ENCODE measurements at regions of chr17 and their contacts with region 1.

Region 1: DNA sequence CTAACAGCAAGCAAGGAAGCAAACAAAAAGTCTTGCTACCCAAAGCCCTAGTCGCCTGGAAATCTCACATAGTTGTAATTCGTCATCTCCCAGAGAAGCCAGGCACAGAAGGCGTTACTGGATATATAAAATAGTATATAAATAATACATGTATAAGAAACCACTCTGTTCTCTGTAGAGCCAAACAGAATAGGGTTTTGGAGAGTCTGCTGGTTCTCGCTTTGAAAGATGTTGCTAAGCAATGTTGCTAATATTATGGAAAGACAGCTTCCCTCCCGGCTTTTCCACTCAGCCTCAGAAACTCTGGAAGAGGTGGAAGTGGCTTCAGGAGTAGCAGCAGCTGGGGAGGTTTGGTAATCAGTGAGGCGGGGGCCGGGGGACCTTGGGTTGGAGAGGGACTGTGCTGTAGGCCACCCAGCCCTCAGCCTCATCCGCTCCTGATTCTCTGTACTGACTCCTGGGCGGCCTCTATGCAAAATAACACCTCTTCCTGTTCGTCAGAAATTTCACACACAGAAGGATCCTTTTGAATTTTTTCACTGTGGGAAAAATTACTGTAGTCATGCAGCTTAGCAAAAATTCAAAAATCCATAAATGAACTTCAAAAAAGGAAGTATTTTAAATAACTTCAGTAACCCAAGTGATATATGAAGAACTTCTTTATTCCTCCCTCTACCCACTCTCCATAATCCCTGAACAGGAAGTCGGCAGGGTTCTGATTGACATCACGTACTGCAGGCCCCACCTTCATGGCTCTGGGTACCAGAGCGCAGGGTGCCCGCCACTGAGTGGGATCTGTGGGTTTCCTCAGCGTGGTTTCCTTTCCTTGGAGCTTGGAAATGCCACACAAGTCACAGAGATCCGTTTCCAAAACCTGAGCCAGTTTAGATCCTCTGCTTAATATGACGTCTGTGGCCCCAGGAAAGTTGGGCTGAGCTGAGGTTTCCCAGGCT is 51.4 kb downstream of the RAP1GAP2 start:
- DNase-seq: peak; percentile 16
- ATAC-seq: no peak
- H3K4me3 Mint-ChIP-seq: no peak overlapping the region
- H3K27ac Mint-ChIP-seq: no peak overlapping the region
- H3K4me1 Mint-ChIP-seq: peaks cover 15% of the 10 kb centered on the region
- H3K27me3 Mint-ChIP-seq: peaks cover 13% of the 10 kb centered on the region

Region 2: DNA sequence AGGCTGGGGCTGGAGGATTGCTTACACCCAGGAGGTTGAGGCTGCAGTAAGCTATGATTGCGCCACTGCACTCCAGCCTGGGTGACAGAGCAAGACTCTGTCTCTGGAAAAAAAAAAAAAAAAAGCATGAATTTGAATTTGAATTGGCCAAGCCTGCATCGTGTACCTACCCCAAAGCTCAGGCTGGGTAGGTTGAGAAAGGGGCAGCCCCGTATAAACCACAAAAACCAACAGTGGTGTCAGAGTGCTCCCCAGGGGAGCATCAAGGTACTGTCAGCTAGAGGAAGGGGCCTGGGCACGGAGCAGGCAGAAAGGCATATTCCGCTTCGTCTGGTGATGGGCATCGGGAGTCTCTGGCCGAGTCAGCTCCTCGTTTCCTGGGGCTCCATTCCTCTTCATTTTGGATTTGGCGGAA is 10.5 kb before region 1 on chr17:
- CTCF ChIA-PET with region 1: interaction called, 15 read pairs
- POLR2A ChIA-PET with region 1: no interaction called
- intact Hi-C with region 1: no loop called
- DNase-seq: peak; percentile 79
- ATAC-seq: peak; percentile 100
- H3K4me3 Mint-ChIP-seq: no peak overlapping the region
- H3K27ac Mint-ChIP-seq: no peak overlapping the region
- H3K4me1 Mint-ChIP-seq: peaks cover 8% of the 10 kb centered on the region
- H3K27me3 Mint-ChIP-seq: no peaks in the 10 kb centered on the region

Region 3: DNA sequence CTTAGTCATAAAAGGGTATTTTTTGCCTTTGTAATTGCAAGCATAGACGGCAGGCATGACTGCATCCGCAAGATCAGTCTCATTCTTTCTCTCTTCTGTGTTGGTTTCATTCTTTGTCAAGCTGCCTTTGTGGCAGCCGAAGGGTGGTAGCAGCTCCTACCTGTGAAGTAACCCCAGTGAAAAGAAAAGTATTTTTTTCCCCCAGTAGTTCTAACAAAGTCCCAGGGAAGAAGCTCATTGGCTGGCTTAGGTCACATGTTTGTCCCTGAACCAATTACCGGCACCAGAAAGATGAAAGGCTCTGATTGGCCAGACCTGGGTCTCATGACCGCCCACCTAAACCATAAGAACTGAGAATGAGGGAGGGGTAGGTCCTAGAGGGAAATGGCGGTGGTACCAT is 59.2 kb after region 1 on chr17:
- CTCF ChIA-PET with region 1: no interaction called
- POLR2A ChIA-PET with region 1: no interaction called
- intact Hi-C with region 1: loop called in 1 of 2 experiments (anchors 2 kb)
- DNase-seq: peak; percentile 76
- ATAC-seq: peak; percentile 99
- H3K4me3 Mint-ChIP-seq: no peak overlapping the region
- H3K27ac Mint-ChIP-seq: peak overlapping the region; percentile 72
- H3K4me1 Mint-ChIP-seq: peaks cover 20% of the 10 kb centered on the region
- H3K27me3 Mint-ChIP-seq: no peaks in the 10 kb centered on the region

Region 4: DNA sequence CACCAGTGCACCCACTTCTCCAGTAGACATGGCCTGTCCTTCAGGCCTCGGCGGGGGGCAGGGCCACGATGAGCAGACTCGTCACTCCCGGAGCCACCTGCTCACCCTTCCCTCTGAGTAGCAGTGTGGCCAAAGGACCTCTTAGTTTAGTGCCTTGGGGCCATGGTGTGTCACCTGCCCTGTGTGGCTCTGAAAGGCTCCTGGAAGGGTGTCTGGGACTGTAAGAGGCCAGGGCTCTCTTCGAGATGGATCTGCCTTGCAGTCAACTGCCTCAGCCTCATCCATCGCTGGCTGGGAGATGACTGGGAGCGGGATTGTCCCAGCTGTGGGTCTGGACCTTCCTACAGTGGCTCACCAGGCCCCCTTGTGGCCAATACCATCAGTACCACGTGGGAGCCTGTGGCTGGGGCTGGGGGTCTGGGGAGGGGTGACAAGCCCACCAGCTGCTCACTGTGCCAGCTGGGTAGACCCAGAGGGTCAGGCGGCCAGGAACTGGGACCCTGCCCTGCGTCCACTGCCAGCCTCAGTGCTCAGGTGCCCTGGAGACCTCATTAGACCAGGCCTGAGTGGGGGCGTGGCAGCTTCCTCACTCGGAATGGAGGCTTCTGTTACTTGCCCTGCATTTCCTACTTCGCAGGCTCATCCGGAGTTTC is 82.3 kb after region 1 on chr17:
- CTCF ChIA-PET with region 1: interaction called, 34 read pairs
- POLR2A ChIA-PET with region 1: no interaction called
- intact Hi-C with region 1: loop called (anchors 1 kb)
- DNase-seq: peak; percentile 59
- ATAC-seq: peak; percentile 57
- H3K4me3 Mint-ChIP-seq: no peak overlapping the region
- H3K27ac Mint-ChIP-seq: no peak overlapping the region
- H3K4me1 Mint-ChIP-seq: peaks cover 10% of the 10 kb centered on the region
- H3K27me3 Mint-ChIP-seq: no peaks in the 10 kb centered on the region

Region 5: GRCh38 chr17:2990396-2990795 is 142.7 kb after region 1 on chr17:
- CTCF ChIA-PET with region 1: no interaction called
- POLR2A ChIA-PET with region 1: no interaction called
- intact Hi-C with region 1: no loop called
- DNase-seq: no peak
- ATAC-seq: no peak
- H3K4me3 Mint-ChIP-seq: no peak overlapping the region
- H3K27ac Mint-ChIP-seq: no peak overlapping the region
- H3K4me1 Mint-ChIP-seq: no peaks in the 10 kb centered on the region
- H3K27me3 Mint-ChIP-seq: no peaks in the 10 kb centered on the region

Region 6: GRCh38 chr17:3012926-3013581 is 165.4 kb after region 1 on chr17:
- CTCF ChIA-PET with region 1: interaction called, 39 read pairs
- POLR2A ChIA-PET with region 1: no interaction called
- intact Hi-C with region 1: loop called (anchors 1 kb)
- DNase-seq: peak; percentile 78
- ATAC-seq: peak; percentile 87
- H3K4me3 Mint-ChIP-seq: no peak overlapping the region
- H3K27ac Mint-ChIP-seq: no peak overlapping the region
- H3K4me1 Mint-ChIP-seq: no peaks in the 10 kb centered on the region
- H3K27me3 Mint-ChIP-seq: no peaks in the 10 kb centered on the region